ENCODE measurements at regions of chr7 and their contacts with region 1.

Region 1: GRCh38 chr7:106112117-106112971 is at the start of gene SYPL1:
- DNase-seq: peak; percentile 97
- total RNA-seq, gene SYPL1: 81.4 to 89.8 TPM

Region 2: GRCh38 chr7:105238198-105238765 is 874.1 kb before region 1 on chr7:
- intact Hi-C with region 1: no loop called
- DNase-seq: no peak

Region 3: GRCh38 chr7:106064771-106065585 is 47.4 kb before region 1 on chr7:
- intact Hi-C with region 1: loop called (anchors 10 kb)
- DNase-seq: peak; percentile 93

Region 4: DNA sequence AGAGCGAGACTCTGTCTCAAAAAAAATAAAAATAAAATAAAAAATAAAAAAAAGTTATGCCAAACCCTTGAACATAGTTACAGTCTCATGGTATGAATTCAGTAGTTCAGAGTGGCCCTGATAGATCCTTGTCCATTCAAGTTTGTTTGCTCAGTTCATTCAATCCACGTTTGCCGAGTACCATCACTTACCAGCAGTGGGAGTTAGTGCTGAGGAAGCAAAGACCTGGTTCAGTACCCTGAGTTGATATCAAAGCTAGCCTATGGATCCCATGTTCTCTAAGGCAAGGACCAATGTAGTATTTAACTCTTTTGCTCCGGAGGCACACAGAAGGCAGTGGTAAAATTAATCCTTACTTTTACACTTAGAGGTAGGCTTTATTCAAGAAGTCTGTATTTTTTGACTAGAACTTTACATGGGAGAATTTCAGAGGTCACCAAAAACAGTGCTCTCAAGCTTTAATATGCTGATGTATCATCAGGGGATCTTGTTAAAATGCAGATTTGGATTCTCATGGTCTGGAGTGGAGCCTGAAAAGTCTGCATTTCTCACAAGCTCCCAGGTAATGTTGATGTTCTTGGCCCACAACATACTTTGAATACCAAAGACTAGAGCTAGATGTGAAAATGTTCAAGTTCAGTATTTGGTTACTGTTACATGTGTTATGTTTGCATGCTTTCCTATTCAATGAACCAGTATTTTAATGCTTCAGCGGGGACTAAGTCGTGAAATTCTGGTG is 1018.3 kb after region 1 on chr7:
- intact Hi-C with region 1: no loop called
- DNase-seq: no peak

Region 5: GRCh38 chr7:107584718-107585117 is 1472.4 kb after region 1 on chr7:
- intact Hi-C with region 1: loop called in 1 of 2 experiments (anchors 5 kb)
- DNase-seq: no peak